ENCODE measurements at regions of chr4 and their contacts with region 1.

Region 1: DNA sequence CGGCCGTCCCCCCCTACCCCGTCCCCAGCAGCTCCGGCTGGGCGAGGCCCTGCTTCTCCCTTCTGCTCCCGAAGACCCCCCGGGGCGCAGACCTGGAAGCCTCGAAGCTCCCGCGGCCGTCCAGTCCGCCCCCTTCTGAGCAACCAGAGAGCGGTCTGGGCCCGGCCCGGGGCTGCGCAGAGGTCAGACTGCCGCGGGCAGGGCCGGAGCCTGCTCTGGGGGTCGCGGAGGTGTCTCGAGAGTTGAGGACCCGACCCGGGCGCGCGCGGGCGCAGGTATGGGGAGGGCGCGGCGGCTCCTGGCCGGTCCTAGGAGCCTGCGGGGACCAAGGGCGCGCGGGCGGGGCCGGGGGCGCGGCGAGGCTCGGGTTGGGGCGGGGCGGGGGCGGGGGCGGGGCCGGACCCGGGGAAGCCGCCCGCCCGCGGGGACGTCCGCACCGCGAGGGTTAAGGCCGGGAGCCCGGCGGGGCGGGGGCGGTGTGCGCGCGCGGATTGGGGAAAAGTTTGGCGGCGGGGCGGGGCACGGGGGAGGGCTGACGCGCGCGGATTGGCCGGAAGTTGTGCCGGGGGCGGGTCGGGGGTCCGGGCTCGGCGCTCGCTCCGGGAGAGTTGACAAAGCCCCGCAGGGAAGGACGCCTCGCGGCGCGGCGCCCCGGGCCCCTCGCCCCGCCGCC is at the start of gene FGFRL1:
- DNase-seq: peak; percentile 96 to 99
- ATAC-seq: peak; percentile 75
- H3K4me3 ChIP-seq: peak within 1 kb of the TSS; percentile 56 to 88
- H3K27ac ChIP-seq: peak within 1 kb of the TSS in 1 of 2 donors; percentile 6
- H3K4me1 ChIP-seq: no peaks in the 10 kb centered on the region
- H3K27me3 ChIP-seq: no peaks in the 10 kb centered on the region
- total RNA-seq, gene FGFRL1: 28.9 to 32.9 TPM

Region 2: DNA sequence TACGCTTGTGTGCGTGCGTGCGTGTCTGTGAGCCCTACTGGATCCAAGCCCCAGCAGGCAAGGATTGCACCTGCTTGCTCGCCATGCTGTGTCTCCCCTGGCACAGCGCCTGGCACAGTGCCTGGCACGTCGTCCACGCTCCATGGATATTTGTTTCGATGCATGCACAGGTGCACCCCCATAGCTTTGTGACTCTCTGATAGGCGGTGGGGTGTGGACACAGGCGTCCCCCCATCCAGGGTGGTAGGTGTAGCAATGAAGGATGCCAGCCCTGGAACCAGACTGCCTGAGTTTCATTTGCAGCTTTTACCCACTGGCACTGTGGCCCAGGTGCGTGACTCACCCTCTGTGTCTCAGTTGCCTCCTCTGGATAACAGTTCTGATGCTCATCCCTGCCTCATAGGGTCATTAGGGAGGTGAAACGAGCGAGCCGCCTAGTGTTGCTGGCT is 491.9 kb before region 1 on chr4:
- intact Hi-C with region 1: no loop called
- DNase-seq: no peak
- ATAC-seq: no peak
- H3K4me3 ChIP-seq: no peak overlapping the region
- H3K27ac ChIP-seq: no peak overlapping the region
- H3K4me1 ChIP-seq: no peaks in the 10 kb centered on the region
- H3K27me3 ChIP-seq: no peaks in the 10 kb centered on the region

Region 3: GRCh38 chr4:876780-877179 is 134.4 kb before region 1 on chr4:
- intact Hi-C with region 1: no loop called
- DNase-seq: no peak
- ATAC-seq: no peak
- H3K4me3 ChIP-seq: no peak overlapping the region
- H3K27ac ChIP-seq: no peak overlapping the region
- H3K4me1 ChIP-seq: no peaks in the 10 kb centered on the region
- H3K27me3 ChIP-seq: no peaks in the 10 kb centered on the region

Region 4: DNA sequence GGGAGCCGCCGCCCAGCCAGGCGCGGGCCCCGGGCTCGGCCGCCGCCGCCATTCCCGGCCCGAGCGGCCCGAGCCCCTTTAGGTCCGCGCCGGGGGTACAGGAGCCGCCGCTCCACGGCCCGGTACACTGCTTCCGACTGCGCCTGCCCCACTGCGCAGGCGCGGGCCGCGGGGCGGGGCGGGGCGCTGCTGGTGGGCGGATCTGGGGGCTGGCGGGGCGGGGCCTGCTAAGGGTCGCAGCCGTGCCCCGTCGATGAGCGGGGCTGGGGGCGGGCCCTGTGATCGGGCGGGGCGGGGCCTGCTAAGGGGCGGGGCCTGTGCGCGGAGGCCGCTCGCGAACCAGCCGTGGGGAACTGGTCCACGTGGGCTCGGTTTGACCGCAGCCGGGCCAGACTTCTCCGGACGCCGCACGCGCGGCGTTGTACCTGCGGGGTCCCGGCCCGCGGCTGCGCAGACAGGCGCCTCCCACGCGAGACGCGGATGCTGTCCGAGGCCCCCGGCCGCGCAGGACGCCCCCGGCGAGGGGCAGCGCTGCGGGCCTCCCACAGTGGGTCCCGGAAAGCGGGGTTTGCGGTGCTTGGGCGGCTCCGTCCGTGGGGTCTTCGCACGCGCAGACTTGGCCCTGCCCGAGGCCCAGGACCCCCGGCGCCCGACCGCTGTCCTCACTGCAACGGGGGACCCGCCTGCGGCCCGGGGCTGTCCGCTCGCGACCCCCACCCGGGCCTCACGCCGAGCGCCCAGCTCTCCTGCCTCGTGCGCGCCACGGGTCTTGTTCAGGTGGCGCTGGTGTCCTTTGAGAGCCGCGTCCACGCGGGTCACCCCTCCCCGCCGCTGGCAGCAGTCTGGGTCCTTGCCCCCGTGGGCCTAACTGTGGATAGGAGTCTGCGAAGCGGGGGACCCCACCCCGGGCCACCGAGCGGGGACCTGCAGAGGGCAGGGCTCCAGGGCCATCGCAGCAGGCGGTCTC is 37.4 kb before region 1 on chr4 and contains the start of gene DGKQ:
- intact Hi-C with region 1: no loop called
- DNase-seq: peak; percentile 90 to 97
- ATAC-seq: peak; percentile 97
- H3K4me3 ChIP-seq: peak within 1 kb of the TSS; percentile 70 to 90
- H3K27ac ChIP-seq: no peak within 1 kb of the TSS
- H3K4me1 ChIP-seq: no peaks in the 10 kb centered on the region
- H3K27me3 ChIP-seq: no peaks in the 10 kb centered on the region
- total RNA-seq, gene DGKQ: 11.2 to 14.2 TPM

Region 5: GRCh38 chr4:1033840-1034551 is 22.8 kb after region 1 on chr4:
- intact Hi-C with region 1: loop called in 1 of 2 experiments (anchors 2 kb)
- DNase-seq: peak; percentile 88 to 93
- ATAC-seq: peak; percentile 66
- H3K4me3 ChIP-seq: no peak overlapping the region
- H3K27ac ChIP-seq: peak overlapping the region; percentile 6 to 87
- H3K4me1 ChIP-seq: no peaks in the 10 kb centered on the region
- H3K27me3 ChIP-seq: no peaks in the 10 kb centered on the region

Region 6: GRCh38 chr4:1072830-1073446 is 61.8 kb after region 1 on chr4:
- intact Hi-C with region 1: loop called in 1 of 2 experiments (anchors 5 kb)
- DNase-seq: peak; percentile 60 to 69
- ATAC-seq: peak; percentile 63
- H3K4me3 ChIP-seq: no peak overlapping the region
- H3K27ac ChIP-seq: no peak overlapping the region
- H3K4me1 ChIP-seq: no peaks in the 10 kb centered on the region
- H3K27me3 ChIP-seq: no peaks in the 10 kb centered on the region

Region 7: DNA sequence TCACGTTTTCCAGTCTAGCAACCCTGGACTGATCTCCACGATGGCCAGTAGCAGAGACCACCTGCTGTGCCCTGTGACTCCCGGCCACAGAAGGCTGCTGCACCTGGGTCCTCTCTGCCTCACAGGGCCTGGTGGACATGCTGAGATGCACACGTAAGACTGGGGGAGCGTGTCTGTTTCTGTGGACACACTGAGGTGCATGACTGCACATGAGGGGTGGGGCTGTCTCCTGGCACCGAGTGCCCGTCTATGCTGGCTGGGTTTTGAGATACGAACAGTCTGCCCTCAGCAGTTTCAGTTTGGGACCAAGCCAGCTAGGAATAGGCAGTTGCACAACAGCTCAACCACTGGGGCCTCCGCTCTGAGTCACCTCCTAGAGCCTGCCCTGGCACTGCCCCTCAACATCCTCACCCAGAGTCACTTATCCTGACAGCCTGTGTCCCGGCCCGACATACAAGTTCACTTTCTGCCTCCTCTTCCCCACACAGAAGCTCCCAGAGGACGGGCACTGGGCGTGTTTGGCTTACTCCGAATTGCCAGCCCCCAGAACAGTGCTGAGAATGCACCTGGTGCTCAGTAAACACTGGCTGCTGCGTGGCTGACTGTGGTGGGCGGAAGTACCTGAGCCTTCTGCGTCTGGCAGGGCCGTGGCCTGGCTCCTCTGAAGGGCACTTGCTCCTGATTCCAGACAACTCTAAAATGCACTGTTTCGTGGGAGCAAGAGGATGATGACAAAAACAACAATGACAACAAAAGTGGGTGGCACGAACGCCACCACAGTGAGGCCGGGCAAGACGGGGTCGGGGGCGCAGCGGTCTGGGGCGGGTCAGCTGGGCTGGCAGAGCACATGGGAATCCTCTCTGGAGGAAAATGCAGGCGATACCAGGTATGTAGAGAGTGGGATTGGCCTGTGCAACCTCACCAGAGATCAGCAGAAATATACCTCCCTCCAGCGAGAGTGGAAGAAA is 71.3 kb after region 1 on chr4:
- intact Hi-C with region 1: loop called in 1 of 2 experiments (anchors 5 kb)
- DNase-seq: peak; percentile 87 to 89
- ATAC-seq: peak; percentile 78
- H3K4me3 ChIP-seq: no peak overlapping the region
- H3K27ac ChIP-seq: no peak overlapping the region
- H3K4me1 ChIP-seq: no peaks in the 10 kb centered on the region
- H3K27me3 ChIP-seq: no peaks in the 10 kb centered on the region

Region 8: DNA sequence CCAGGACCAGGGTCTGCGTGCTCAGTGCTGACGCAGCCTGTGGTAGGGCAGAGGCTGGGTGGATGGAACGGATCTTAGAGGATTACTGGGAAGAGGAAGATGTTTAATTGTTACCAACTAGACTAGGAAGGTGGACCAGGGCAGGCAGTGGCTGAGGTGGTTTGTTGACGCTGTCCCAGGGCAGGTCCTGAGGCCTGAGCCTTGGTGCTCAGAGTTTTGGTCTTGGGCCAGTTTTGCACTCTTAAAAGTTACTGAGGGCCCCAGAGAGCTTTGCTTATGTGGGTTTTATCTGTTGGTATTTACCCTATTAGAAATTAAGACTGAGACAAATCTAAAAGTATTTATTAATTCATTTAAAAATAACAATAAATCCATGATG is 81.8 kb after region 1 on chr4:
- intact Hi-C with region 1: no loop called
- DNase-seq: no peak
- ATAC-seq: no peak
- H3K4me3 ChIP-seq: no peak overlapping the region
- H3K27ac ChIP-seq: no peak overlapping the region
- H3K4me1 ChIP-seq: no peaks in the 10 kb centered on the region
- H3K27me3 ChIP-seq: no peaks in the 10 kb centered on the region